CD8-positive, alpha-beta T cell (primary cell): ENCODE measurements at regions of chr17 and their contacts with region 1.

Region 1: DNA sequence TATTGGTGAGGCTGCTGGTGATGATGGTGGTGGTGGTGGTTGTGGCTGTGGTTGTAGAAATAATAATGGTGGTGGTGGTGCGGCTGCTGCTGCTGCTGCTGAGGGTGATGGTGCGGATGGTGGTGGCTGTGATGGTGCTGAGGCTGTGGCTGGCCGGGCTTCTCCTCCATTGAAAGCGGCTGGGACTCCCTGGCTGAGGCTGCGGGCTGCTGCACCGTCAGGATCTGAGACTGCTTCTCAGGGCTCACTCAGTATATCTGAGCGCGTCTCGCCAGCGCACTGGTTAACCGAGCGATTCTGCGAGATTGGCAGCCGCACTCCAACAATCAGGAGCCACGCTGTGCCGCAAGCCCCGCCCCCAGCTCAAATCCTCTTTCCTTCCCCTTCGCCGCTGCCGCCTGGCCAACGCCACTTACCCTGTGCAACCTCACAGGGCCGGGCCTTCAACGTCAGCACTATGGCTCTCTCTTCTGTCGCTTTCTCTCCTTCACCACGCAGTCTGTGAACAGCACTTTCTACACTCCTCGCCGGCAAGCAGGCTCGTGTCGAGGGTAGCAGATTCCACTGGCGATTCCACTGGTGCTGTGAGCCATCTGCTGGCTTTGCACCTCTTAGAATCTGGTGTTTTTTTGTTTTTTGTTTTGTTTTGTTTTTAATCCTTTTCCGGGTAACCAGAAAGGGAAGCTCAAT is at the start of gene NUFIP2:
- DNase-seq: peak; percentile 94 to 100 (median 99)
- ATAC-seq: peak; percentile 86
- H3K4me3 ChIP-seq: peak within 1 kb of the TSS; percentile 93 to 94
- H3K4me3 Mint-ChIP-seq: peak within 1 kb of the TSS; percentile 99
- H3K27ac ChIP-seq: peak within 1 kb of the TSS; percentile 70 to 89
- H3K27ac Mint-ChIP-seq: peak within 1 kb of the TSS; percentile 98
- H3K4me1 ChIP-seq: peaks cover 40% of the 10 kb centered on the region
- H3K4me1 Mint-ChIP-seq: peaks cover 42% of the 10 kb centered on the region
- H3K27me3 ChIP-seq: no peaks in the 10 kb centered on the region
- H3K27me3 Mint-ChIP-seq: no peaks in the 10 kb centered on the region
- CTCF ChIP-seq: no peak
- total RNA-seq, gene NUFIP2: 67.9 to 71.8 TPM

Region 2: DNA sequence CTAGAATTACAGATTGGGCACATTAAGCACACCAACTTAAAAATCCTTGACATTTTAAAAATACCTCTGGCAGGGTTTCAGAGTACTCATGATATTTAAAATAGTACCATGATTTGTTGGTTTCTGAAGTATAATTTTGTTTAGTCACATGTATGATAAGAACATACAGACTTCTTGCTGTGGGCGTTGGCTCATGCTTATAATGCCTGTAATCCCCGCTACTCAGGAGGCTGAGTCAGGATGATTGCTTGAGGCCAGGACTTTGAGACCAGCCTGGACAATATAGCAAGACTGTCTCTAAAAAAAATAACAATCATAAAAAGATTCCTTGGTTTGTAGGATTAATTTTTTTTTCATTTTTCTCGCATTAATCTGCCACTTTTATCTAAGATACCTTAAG is 1572.2 kb before region 1 on chr17:
- CTCF ChIA-PET with region 1: no interaction called
- POLR2A ChIA-PET with region 1: no interaction called
- intact Hi-C with region 1: no loop called
- DNase-seq: no peak
- ATAC-seq: no peak
- H3K4me3 ChIP-seq: no peak overlapping the region
- H3K4me3 Mint-ChIP-seq: no peak overlapping the region
- H3K27ac ChIP-seq: no peak overlapping the region
- H3K27ac Mint-ChIP-seq: no peak overlapping the region
- H3K4me1 ChIP-seq: no peaks in the 10 kb centered on the region
- H3K4me1 Mint-ChIP-seq: no peaks in the 10 kb centered on the region
- H3K27me3 ChIP-seq: no peaks in the 10 kb centered on the region
- H3K27me3 Mint-ChIP-seq: peaks cover 14% of the 10 kb centered on the region
- CTCF ChIP-seq: no peak

Region 3: DNA sequence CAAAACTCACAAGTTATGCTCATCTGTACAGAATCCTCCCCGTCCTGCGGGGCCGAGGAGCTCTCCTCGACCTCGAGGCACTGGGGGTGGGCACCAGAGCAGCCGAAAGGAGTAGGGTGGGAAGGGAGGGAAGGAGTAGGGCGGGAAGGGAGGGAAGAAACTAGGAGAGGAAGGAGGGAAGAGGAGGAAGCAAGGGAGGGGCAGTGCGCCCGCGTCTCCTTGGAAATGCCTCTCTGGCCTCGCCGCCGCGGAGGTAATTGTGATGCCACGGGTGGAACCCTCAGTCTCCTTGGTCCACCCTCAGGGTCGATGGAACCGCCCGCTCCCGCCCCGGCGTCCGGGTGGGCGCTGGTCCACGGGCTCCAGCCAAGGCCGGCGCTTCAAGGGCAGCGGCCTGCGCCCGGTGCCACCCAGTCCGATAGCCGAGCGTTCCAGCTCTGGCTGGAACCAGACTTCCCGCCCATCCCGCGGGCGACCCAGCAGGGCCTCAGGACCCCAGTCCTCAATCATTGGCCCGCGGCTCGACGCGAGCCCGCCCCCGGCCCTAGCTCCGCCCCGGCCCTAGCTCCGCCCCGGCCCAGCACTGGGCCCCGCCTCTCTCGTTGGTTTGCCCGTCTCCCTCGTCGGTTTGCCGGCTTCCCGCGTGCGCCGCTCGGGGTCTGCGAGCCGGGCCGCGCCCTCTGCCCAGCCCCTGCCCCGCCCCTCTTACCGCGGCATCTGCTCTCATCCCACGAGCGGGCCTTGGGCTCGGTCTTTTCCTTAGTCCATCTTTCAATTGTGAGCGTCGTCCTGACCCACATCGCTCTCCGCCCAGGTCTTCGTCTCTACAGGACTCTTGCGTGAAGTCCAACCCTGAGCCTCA is 582.9 kb before region 1 on chr17:
- CTCF ChIA-PET with region 1: no interaction called
- POLR2A ChIA-PET with region 1: no interaction called
- intact Hi-C with region 1: loop called in 1 of 2 experiments (anchors 10 kb)
- DNase-seq: peak; percentile 77 to 90 (median 89)
- ATAC-seq: peak; percentile 92
- H3K4me3 ChIP-seq: peak overlapping the region; percentile 66 to 89
- H3K4me3 Mint-ChIP-seq: peak overlapping the region; percentile 89
- H3K27ac ChIP-seq: peak overlapping the region; percentile 69 to 76
- H3K27ac Mint-ChIP-seq: peak overlapping the region; percentile 91
- H3K4me1 ChIP-seq: peaks cover 16% of the 10 kb centered on the region
- H3K4me1 Mint-ChIP-seq: peaks cover 17% of the 10 kb centered on the region
- H3K27me3 ChIP-seq: no peaks in the 10 kb centered on the region
- H3K27me3 Mint-ChIP-seq: peaks cover 14% of the 10 kb centered on the region
- CTCF ChIP-seq: no peak

Region 4: GRCh38 chr17:28878981-28879380 is 415.1 kb before region 1 on chr17:
- CTCF ChIA-PET with region 1: no interaction called
- POLR2A ChIA-PET with region 1: no interaction called
- intact Hi-C with region 1: no loop called
- DNase-seq: peak in 1 of 9 experiments; percentile 26
- ATAC-seq: no peak
- H3K4me3 ChIP-seq: no peak overlapping the region
- H3K4me3 Mint-ChIP-seq: no peak overlapping the region
- H3K27ac ChIP-seq: no peak overlapping the region
- H3K27ac Mint-ChIP-seq: no peak overlapping the region
- H3K4me1 ChIP-seq: no peaks in the 10 kb centered on the region
- H3K4me1 Mint-ChIP-seq: no peaks in the 10 kb centered on the region
- H3K27me3 ChIP-seq: no peaks in the 10 kb centered on the region
- H3K27me3 Mint-ChIP-seq: no peaks in the 10 kb centered on the region
- CTCF ChIP-seq: no peak

Region 5: DNA sequence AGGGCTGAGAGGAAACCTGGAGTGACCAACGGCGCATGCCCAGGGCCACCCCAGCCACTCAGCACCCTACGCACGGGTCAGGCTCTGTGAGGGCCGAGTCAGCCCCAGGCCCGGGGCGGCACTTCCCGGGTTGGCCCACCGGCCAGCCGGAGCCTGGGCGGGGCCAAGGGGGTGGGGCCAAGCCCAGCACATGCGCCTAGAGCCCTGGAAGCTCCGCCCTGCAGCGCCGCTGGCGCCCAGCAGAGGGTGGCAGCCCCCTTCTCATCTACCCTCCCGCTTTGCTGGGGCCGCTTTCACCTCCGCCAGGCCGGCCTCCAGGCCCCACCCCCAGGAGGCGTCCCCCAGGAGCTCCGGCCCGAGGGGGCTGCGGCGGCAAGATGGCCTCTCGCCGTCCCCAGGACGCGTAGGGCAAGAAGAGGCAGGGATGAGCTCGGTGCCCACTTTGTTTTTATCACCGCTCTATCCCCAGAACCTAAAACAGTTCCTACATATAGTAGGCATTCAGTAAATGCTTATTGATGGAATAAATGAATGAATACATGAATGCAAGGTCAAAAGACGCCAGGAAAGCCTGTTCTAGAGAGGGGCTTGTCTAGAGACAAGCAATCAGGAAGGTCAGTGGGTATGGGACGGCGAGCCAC is 145.1 kb before region 1 on chr17:
- CTCF ChIA-PET with region 1: interaction called, 12 read pairs
- POLR2A ChIA-PET with region 1: interaction called, 8 read pairs
- intact Hi-C with region 1: loop called (anchors 1 to 2 kb)
- DNase-seq: peak; percentile 82 to 95 (median 91)
- ATAC-seq: peak; percentile 97
- H3K4me3 ChIP-seq: peak overlapping the region; percentile 54 to 56
- H3K4me3 Mint-ChIP-seq: peak overlapping the region; percentile 76
- H3K27ac ChIP-seq: peak overlapping the region in 1 of 2 experiments; percentile 88
- H3K27ac Mint-ChIP-seq: peak overlapping the region; percentile 87
- H3K4me1 ChIP-seq: peaks cover 23% of the 10 kb centered on the region
- H3K4me1 Mint-ChIP-seq: peaks cover 33% of the 10 kb centered on the region
- H3K27me3 ChIP-seq: no peaks in the 10 kb centered on the region
- H3K27me3 Mint-ChIP-seq: no peaks in the 10 kb centered on the region
- CTCF ChIP-seq: peak; percentile 98

Region 6: DNA sequence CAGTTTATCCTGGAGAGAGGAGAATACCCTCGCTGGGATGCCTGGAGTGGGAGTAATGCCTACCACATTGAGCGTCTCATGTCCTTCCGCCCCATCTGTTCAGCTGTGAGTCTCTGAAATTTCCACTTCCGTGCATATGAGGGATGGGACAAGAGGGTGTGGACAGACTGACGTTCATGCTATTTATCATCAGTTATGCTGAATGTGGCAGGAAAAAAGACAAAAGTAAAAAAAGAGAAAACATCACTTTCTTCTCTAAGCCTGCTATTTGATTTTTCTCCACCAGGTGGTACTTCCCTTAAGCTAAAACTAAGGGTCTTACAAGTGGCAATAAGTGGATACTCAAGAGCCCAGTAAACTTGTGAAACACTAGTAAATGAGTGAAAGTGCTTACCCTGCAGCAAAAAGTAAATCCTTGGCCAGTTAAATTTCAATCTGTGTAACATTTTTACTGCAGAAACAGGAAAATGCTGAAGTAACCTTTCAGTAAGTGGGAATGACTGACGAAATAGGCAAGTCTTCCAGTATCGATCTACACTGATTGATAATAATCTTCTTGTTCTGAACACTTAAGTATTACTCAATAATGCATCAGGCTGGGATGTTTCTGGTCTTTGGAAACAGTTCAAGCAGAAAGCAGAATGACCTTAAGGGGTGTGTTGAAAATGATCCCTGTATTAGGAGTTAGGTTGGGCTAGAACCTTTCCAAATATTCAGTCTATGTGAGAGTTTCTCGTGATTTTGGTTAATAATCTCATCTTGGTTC is 41.8 kb before region 1 on chr17:
- CTCF ChIA-PET with region 1: interaction called, 12 read pairs
- POLR2A ChIA-PET with region 1: interaction called, 3 read pairs
- intact Hi-C with region 1: loop called (anchors 1 kb)
- DNase-seq: peak in 2 of 9 experiments; percentile 35 to 48
- ATAC-seq: no peak
- H3K4me3 ChIP-seq: no peak overlapping the region
- H3K4me3 Mint-ChIP-seq: no peak overlapping the region
- H3K27ac ChIP-seq: no peak overlapping the region
- H3K27ac Mint-ChIP-seq: no peak overlapping the region
- H3K4me1 ChIP-seq: no peaks in the 10 kb centered on the region
- H3K4me1 Mint-ChIP-seq: peaks cover 7% of the 10 kb centered on the region
- H3K27me3 ChIP-seq: no peaks in the 10 kb centered on the region
- H3K27me3 Mint-ChIP-seq: no peaks in the 10 kb centered on the region
- CTCF ChIP-seq: peak; percentile 63

Region 7: DNA sequence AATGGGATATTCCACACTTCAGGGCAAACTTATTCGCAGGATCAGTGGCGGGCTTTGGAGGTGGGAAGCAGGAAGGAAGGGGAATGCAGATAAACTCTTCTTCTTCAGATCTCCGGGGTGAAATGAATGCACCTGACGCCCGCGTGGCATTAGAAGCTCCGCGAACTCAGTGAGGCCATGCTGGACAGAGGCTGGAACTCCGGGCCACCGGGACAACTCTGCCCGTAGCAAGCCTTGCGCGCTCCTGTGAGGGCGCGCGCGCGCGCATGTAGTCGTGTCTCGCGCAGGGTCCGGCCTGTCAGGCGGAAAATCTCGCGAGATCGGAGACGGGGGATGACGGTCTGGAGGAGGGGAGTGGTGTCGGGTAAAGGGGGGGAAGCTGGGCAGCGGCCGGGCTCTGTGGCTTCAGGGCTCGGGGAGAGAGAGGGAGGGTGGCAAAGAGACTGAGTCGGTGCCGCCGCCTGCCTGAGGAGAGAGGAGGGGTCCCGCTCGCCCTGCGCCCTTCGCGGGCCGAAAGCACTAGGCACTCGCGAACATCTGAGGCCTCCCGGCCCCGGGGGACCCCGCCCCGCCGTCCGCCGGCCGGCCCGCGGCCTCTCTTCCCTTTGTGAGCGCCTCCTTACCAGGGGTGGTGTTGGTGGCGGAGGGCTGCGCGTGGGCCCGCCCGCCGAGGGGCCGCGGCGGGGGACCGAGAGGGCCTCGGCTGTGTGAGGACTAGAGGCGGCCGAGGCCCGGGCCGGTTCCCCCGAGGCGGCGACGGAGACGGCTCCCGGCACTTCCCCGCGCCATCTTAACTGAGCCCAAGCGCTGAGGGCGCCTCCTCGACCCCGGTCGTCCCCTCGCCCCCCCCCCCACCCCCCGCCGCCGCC is 96.2 kb after region 1 on chr17 and contains the start of gene TAOK1:
- CTCF ChIA-PET with region 1: no interaction called
- POLR2A ChIA-PET with region 1: interaction called, 5 read pairs
- intact Hi-C with region 1: loop called (anchors 1 to 2 kb)
- DNase-seq: peak; percentile 94 to 99 (median 98)
- ATAC-seq: peak; percentile 91
- H3K4me3 ChIP-seq: peak within 1 kb of the TSS; percentile 77 to 85
- H3K4me3 Mint-ChIP-seq: peak within 1 kb of the TSS; percentile 93
- H3K27ac ChIP-seq: peak within 1 kb of the TSS; percentile 84 to 87
- H3K27ac Mint-ChIP-seq: peak within 1 kb of the TSS; percentile 98
- H3K4me1 ChIP-seq: peaks cover 22% of the 10 kb centered on the region
- H3K4me1 Mint-ChIP-seq: peaks cover 41% of the 10 kb centered on the region
- H3K27me3 ChIP-seq: no peaks in the 10 kb centered on the region
- H3K27me3 Mint-ChIP-seq: no peaks in the 10 kb centered on the region
- CTCF ChIP-seq: no peak
- total RNA-seq, gene TAOK1: 25.2 to 26.8 TPM

Region 8: DNA sequence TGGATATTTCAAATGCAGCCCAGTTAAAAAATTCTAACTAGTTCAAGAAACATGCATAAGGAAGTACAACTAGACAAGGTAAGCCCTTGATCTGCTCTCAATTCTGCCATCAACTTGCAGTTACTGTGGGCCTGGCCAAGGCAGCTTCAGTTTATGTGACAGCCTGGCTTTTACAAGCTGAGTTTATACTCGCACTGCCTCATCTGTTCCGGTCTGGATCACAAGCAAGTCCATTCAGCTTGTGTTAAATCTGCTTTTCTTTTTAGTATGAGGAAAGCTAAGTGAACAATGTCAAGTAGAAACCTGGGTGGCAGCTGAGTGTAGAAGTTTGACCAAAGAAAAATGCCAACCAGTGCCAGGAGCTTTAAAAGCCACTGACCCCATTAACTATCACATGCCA is 405.2 kb after region 1 on chr17:
- CTCF ChIA-PET with region 1: no interaction called
- POLR2A ChIA-PET with region 1: no interaction called
- intact Hi-C with region 1: no loop called
- DNase-seq: no peak
- ATAC-seq: no peak
- H3K4me3 ChIP-seq: no peak overlapping the region
- H3K4me3 Mint-ChIP-seq: no peak overlapping the region
- H3K27ac ChIP-seq: peak overlapping the region in 1 of 2 experiments; percentile 7
- H3K27ac Mint-ChIP-seq: peak overlapping the region; percentile 84
- H3K4me1 ChIP-seq: peaks cover 7% of the 10 kb centered on the region
- H3K4me1 Mint-ChIP-seq: peaks cover 31% of the 10 kb centered on the region
- H3K27me3 ChIP-seq: no peaks in the 10 kb centered on the region
- H3K27me3 Mint-ChIP-seq: no peaks in the 10 kb centered on the region
- CTCF ChIP-seq: no peak

Region 9: DNA sequence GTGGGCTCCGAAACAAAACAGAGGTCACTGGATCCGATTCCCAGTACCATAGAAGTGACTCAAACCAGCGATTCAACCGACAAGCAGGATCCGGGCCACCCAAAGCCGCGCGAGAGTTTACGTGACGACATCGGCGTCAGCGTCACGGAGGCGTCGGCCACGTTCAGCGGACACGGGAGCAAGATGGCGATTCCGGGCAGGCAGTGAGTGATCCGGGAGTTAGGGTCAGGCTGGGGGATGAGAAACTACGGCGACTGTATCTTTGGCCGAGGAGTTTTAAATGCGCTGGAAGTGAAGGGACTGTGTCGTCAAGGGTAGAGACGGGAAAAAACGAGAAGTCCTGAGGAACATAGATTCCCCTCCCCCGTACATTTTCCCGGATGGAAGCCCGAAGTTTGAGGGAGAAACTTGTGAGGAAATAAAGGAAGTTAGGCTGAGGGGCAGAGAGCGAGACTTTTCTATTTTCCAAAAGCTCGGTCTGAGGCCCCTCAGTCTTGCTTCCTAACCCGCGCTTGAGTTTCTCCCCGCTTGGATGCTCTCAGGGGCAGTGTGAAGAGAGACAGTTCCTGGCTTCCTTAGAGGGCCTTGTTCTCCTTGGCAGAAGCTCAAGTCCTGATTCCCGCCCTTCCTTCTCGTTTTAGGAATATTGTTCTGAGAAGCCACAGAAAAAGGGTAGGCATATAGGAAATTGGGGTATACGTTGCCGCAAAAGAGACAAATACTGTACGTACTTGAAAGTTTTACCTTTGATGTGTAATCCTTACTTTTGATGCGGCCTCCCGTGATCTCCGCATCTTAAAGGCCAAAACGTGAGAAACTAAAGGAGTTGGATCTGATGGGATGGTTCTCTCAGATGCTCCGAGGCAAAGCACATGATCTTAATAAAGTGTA is 822.9 kb after region 1 on chr17 and contains the start of gene NSRP1:
- CTCF ChIA-PET with region 1: no interaction called
- POLR2A ChIA-PET with region 1: no interaction called
- intact Hi-C with region 1: loop called in 1 of 2 experiments (anchors 5 kb)
- DNase-seq: peak; percentile 83 to 96 (median 92)
- ATAC-seq: peak; percentile 97
- H3K4me3 ChIP-seq: peak within 1 kb of the TSS; percentile 66 to 96
- H3K4me3 Mint-ChIP-seq: peak within 1 kb of the TSS; percentile 100
- H3K27ac ChIP-seq: peak within 1 kb of the TSS; percentile 95 to 99
- H3K27ac Mint-ChIP-seq: peak within 1 kb of the TSS; percentile 100
- H3K4me1 ChIP-seq: peaks cover 16% of the 10 kb centered on the region
- H3K4me1 Mint-ChIP-seq: peaks cover 41% of the 10 kb centered on the region
- H3K27me3 ChIP-seq: no peaks in the 10 kb centered on the region
- H3K27me3 Mint-ChIP-seq: no peaks in the 10 kb centered on the region
- CTCF ChIP-seq: no peak
- total RNA-seq, gene NSRP1: 22.4 to 23.1 TPM

Region 10: DNA sequence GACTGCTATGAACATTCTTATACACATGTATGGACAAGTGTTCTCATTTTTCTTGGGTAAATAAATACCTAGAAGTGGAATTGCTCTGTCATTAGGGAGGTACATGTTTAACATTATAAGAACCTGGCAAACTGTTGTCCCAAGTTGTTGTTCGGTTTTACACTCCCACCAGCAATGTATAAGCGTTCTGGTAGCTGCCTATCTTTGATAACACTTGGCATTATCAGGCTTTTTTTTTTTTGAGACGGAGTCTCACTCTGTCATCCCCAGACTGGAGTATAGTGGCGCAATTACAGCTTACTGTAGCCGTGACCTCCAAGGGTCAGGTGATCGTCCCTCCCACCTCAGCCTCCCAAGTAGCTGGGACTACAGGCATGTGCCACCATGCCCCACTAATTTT is 1554.0 kb after region 1 on chr17:
- CTCF ChIA-PET with region 1: no interaction called
- POLR2A ChIA-PET with region 1: no interaction called
- intact Hi-C with region 1: no loop called
- DNase-seq: no peak
- ATAC-seq: no peak
- H3K4me3 ChIP-seq: no peak overlapping the region
- H3K4me3 Mint-ChIP-seq: no peak overlapping the region
- H3K27ac ChIP-seq: no peak overlapping the region
- H3K27ac Mint-ChIP-seq: no peak overlapping the region
- H3K4me1 ChIP-seq: no peaks in the 10 kb centered on the region
- H3K4me1 Mint-ChIP-seq: no peaks in the 10 kb centered on the region
- H3K27me3 ChIP-seq: no peaks in the 10 kb centered on the region
- H3K27me3 Mint-ChIP-seq: no peaks in the 10 kb centered on the region
- CTCF ChIP-seq: no peak